OCI-LY7 (cell line): ENCODE measurements at regions of chr13 and their contacts with region 1.

Region 1: GRCh38 chr13:40692946-40693345 is 26.5 kb upstream of the FOXO1 start:
- DNase-seq: no peak
- H3K4me3 ChIP-seq: no peak overlapping the region
- H3K27ac ChIP-seq: peak overlapping the region; percentile 64
- H3K4me1 ChIP-seq: peaks cover 66% of the 10 kb centered on the region
- CTCF ChIP-seq: no peak

Region 2: DNA sequence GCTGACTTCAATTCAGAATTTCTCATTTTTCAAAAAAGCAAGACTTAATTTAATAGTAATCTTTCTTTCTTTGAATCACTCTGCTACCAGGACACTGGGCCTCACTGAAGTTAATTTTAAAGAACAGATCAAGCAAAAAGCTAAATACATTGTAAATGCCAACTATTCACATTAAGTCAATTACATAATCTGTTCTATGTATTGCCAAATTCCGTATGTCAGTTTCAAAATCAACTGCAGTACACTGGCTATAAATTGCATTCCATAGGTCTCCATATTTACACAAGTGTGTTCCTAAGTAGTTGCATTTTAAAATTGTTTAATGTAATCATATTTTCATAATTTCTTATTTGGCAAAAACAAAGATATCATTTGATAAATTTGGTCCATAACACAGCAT is 36.6 kb before region 1 on chr13:
- CTCF ChIA-PET with region 1: no interaction called
- POLR2A ChIA-PET with region 1: no interaction called
- intact Hi-C with region 1: no loop called
- DNase-seq: no peak
- H3K4me3 ChIP-seq: no peak overlapping the region
- H3K27ac ChIP-seq: peak overlapping the region; percentile 96
- H3K4me1 ChIP-seq: peaks cover 90% of the 10 kb centered on the region
- CTCF ChIP-seq: no peak

Region 3: DNA sequence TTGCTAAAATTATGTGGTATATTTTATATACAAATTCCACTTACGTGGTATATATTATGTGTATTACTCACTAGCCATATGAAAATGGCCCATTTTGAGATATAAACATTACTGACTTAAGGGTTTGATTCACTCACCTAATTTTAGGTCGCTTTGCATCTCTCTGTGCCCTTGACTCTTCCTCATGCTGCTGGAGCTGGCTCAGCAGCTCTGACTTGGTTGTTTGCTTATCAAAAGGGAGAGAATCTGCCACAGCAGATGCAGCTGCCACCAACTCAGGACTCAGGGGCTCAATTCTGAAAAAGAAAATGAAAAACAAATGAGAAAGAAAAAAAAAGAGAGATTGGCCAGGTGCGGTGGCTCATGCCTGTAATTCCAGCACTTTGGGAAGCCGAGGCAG is 65.9 kb after region 1 on chr13:
- CTCF ChIA-PET with region 1: no interaction called
- POLR2A ChIA-PET with region 1: interaction called, 5 read pairs
- intact Hi-C with region 1: loop called (anchors 2 kb)
- DNase-seq: peak; percentile 77
- H3K4me3 ChIP-seq: peak overlapping the region; percentile 2
- H3K27ac ChIP-seq: peak overlapping the region; percentile 78
- H3K4me1 ChIP-seq: peaks cover 86% of the 10 kb centered on the region
- CTCF ChIP-seq: no peak